Right cardiac atrium (tissue), 5 donors: ENCODE measurements at regions of chr3 and their contacts with region 1.

Region 1: GRCh38 chr3:108090701-108091451 is at the start of gene CD47:
- DNase-seq: peak; percentile 96 to 99 (median 98)
- ATAC-seq: peak; percentile 96 to 97
- H3K4me3 ChIP-seq: peak within 1 kb of the TSS; percentile 81
- H3K27ac ChIP-seq: peak within 1 kb of the TSS; percentile 16
- H3K4me1 ChIP-seq: no peaks in the 10 kb centered on the region
- H3K27me3 ChIP-seq: no peaks in the 10 kb centered on the region
- total RNA-seq, gene CD47: 53.5 to 96.6 (median 72.1) TPM

Region 2: GRCh38 chr3:107956991-107957900 is 133.6 kb before region 1 on chr3:
- intact Hi-C with region 1: loop called in 1 of 4 experiments (anchors 10 kb)
- DNase-seq: peak; percentile 86 to 92 (median 90)
- ATAC-seq: peak; percentile 96 to 97
- H3K4me3 ChIP-seq: no peak overlapping the region
- H3K27ac ChIP-seq: peak overlapping the region; percentile 77
- H3K4me1 ChIP-seq: no peaks in the 10 kb centered on the region
- H3K27me3 ChIP-seq: no peaks in the 10 kb centered on the region